OCI-LY7 (cell line): ENCODE measurements at regions of chr12 and their contacts with region 1.

Region 1: DNA sequence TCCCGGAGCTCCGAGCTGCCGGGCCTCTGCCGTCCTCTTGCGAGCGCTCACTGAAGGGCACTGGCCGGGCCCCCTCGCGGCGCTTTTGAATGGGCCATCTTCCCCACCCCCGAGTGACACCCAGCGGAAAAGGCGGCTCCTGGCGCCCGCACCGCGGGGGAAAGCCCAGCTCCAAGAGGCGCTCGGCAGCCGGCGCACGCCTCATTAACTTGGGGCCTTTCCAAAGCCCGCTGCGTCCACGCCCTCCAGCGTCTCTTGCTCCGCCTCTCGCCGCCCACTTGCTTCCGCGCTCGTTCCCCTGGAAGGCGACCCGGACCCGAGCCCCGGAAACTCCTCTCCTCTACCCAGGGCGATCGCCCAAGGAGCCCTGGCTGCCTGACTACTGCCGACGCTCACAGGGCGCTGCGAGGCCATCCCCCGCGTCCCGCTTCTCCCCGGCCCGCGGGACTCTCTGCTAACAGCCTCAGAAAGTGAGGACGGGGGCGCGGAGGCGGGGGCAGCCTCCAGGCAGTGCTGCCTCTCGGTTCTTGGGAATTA is at the start of gene PHLDA1:
- DNase-seq: peak; percentile 91
- H3K4me3 ChIP-seq: peak within 1 kb of the TSS; percentile 71
- H3K27ac ChIP-seq: no peak within 1 kb of the TSS
- H3K4me1 ChIP-seq: peaks cover 28% of the 10 kb centered on the region
- CTCF ChIP-seq: peak; percentile 73
- total RNA-seq, gene PHLDA1: 0.44 and 0.54 TPM in 2 replicates

Region 2: DNA sequence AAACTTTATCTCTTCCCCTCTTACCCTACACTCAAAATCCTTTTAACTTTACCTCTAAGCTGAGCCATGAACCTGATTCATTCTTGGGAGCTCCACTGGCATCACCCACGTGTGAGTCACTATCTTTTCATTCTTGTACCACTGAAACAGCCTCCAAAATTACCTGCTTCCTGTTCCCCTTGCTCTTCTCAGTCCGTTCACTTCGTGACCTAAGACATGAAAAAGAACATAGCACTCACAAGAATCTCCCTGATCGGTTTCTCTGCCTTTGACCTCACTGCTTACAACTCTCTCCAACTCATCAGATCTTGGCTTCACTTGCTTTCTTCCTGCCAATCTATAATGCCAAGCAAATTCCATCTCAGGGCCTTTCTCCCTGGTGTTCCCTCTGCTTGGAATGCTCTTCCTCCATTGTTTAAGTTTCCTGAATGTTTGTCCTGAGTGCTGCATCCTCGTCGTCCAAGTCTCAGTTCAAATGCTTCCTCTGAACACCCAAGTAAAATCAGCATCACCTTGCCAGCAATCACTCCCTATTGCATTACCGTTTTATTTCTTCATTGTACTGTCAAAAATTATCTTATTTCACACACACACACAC is 541.9 kb before region 1 on chr12:
- CTCF ChIA-PET with region 1: interaction called, 3 read pairs
- POLR2A ChIA-PET with region 1: interaction called, 3 read pairs
- intact Hi-C with region 1: loop called (anchors 5 kb)
- DNase-seq: no peak
- H3K4me3 ChIP-seq: no peak overlapping the region
- H3K27ac ChIP-seq: no peak overlapping the region
- H3K4me1 ChIP-seq: no peaks in the 10 kb centered on the region
- CTCF ChIP-seq: no peak

Region 3: DNA sequence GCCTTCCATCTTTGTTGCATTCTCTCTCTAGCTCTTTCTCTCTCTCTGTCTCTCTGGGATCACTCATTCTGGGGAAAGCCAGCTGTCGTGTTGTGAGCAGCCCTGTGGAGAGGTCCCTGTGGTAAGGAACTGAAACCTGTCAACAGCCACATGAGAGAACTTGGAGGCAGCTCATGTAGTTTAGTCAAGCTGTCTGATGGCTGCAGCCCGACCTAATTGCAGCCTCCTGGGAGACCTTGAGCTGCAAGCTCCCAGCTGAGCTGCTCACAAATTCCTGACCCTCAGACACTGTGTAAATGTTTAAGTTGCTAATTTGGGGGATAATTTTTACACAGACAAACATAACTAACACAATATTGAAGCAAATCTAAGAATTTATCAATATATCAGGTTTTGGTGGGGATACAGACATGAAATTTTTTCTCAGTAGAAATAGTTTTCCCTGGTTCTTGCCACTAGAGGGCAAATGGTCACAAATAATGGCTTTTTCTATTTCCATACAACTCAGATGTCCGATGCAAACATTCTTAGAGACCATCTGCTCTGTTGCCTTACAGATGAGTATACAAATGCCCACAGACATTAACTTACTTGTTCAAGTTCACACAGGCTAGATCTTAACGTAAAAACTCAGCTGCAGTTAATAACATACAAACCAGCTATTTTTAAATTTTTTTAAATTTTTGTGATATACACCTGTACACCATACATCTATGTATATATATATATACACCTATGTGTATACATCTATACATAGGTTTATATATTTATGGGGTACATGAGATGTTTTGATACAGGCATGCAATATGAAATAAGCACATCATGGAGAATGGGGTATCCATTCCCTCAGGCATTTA is 504.7 kb before region 1 on chr12:
- CTCF ChIA-PET with region 1: interaction called, 6 read pairs
- POLR2A ChIA-PET with region 1: interaction called, 5 read pairs
- intact Hi-C with region 1: loop called (anchors 1 kb)
- DNase-seq: peak; percentile 86
- H3K4me3 ChIP-seq: peak overlapping the region; percentile 17
- H3K27ac ChIP-seq: peak overlapping the region; percentile 20
- H3K4me1 ChIP-seq: peaks cover 30% of the 10 kb centered on the region
- CTCF ChIP-seq: peak; percentile 96

Region 4: GRCh38 chr12:75641031-75641780 is 390.4 kb before region 1 on chr12:
- CTCF ChIA-PET with region 1: no interaction called
- POLR2A ChIA-PET with region 1: interaction called, 4 read pairs
- intact Hi-C with region 1: loop called (anchors 2 kb)
- DNase-seq: peak; percentile 89
- H3K4me3 ChIP-seq: peak overlapping the region; percentile 30
- H3K27ac ChIP-seq: peak overlapping the region; percentile 71
- H3K4me1 ChIP-seq: peaks cover 51% of the 10 kb centered on the region
- CTCF ChIP-seq: no peak

Region 5: DNA sequence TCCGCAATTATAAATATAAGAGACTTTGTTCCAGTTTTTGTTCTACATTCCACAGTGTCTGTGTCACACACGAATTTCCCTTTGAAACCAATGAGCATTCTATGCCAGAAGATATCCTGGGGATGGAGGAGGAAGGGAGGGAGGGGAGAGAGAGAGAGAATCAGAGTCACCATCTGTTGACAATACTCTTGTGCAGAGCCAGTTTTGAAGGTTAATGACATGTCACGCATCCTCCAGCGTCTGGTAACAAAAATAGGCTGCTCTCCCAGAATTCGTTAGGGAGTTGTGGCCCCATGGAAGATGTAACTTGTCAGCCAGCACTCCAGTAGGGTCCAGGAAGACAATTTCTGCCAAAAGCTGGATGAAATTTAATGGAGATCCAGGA is 306.7 kb before region 1 on chr12:
- CTCF ChIA-PET with region 1: no interaction called
- POLR2A ChIA-PET with region 1: no interaction called
- intact Hi-C with region 1: no loop called
- DNase-seq: no peak
- H3K4me3 ChIP-seq: no peak overlapping the region
- H3K27ac ChIP-seq: no peak overlapping the region
- H3K4me1 ChIP-seq: peaks cover 8% of the 10 kb centered on the region
- CTCF ChIP-seq: no peak

Region 6: GRCh38 chr12:75814851-75815754 is 216.5 kb before region 1 on chr12:
- CTCF ChIA-PET with region 1: no interaction called
- POLR2A ChIA-PET with region 1: interaction called, 3 read pairs
- intact Hi-C with region 1: loop called (anchors 1 kb)
- DNase-seq: peak; percentile 65
- H3K4me3 ChIP-seq: peak overlapping the region; percentile 9
- H3K27ac ChIP-seq: peak overlapping the region; percentile 51
- H3K4me1 ChIP-seq: peaks cover 19% of the 10 kb centered on the region
- CTCF ChIP-seq: no peak

Region 7: GRCh38 chr12:75960086-75960910 is 71.3 kb before region 1 on chr12:
- CTCF ChIA-PET with region 1: interaction called, 3 read pairs
- POLR2A ChIA-PET with region 1: interaction called, 3 read pairs
- intact Hi-C with region 1: loop called (anchors 1 kb)
- DNase-seq: peak; percentile 93
- H3K4me3 ChIP-seq: peak overlapping the region; percentile 6
- H3K27ac ChIP-seq: peak overlapping the region; percentile 87
- H3K4me1 ChIP-seq: peaks cover 62% of the 10 kb centered on the region
- CTCF ChIP-seq: no peak